Mammary epithelial cell (primary cell): ENCODE measurements at regions of chr11 and their contacts with region 1.

Region 1: GRCh38 chr11:69642913-69643632 is 2.1 kb downstream of the CCND1 start:
- DNase-seq: peak; percentile 71
- H3K4me3 ChIP-seq: peak overlapping the region; percentile 59 to 100 (median 98)
- H3K27ac ChIP-seq: peak overlapping the region; percentile 62
- H3K4me1 ChIP-seq: peaks cover 28% of the 10 kb centered on the region
- H3K27me3 ChIP-seq: no peaks in the 10 kb centered on the region
- CTCF ChIP-seq: peak; percentile 77 to 90

Region 2: GRCh38 chr11:68839054-68839865 is 803.8 kb before region 1 on chr11:
- CTCF ChIA-PET with region 1: no interaction called
- dilution Hi-C with region 1: no loop called
- in situ Hi-C with region 1: no loop called
- intact Hi-C with region 1: loop called (anchors 10 kb)
- DNase-seq: peak; percentile 89
- H3K4me3 ChIP-seq: peak overlapping the region; percentile 45 to 50 (median 49)
- H3K27ac ChIP-seq: peak overlapping the region; percentile 42
- H3K4me1 ChIP-seq: peaks cover 38% of the 10 kb centered on the region
- H3K27me3 ChIP-seq: no peaks in the 10 kb centered on the region
- CTCF ChIP-seq: peak in 1 of 2 donors; percentile 1

Region 3: GRCh38 chr11:69131644-69132300 is 511.3 kb before region 1 on chr11:
- CTCF ChIA-PET with region 1: interaction called, 3 read pairs
- dilution Hi-C with region 1: no loop called
- in situ Hi-C with region 1: no loop called
- intact Hi-C with region 1: loop called (anchors 1 kb)
- DNase-seq: peak; percentile 78
- H3K4me3 ChIP-seq: no peak overlapping the region
- H3K27ac ChIP-seq: no peak overlapping the region
- H3K4me1 ChIP-seq: peaks cover 4% of the 10 kb centered on the region
- H3K27me3 ChIP-seq: no peaks in the 10 kb centered on the region
- CTCF ChIP-seq: peak; percentile 90 to 94

Region 4: GRCh38 chr11:69296890-69297786 is 345.9 kb before region 1 on chr11:
- CTCF ChIA-PET with region 1: no interaction called
- dilution Hi-C with region 1: no loop called
- in situ Hi-C with region 1: loop called (anchors 5 to 10 kb)
- intact Hi-C with region 1: loop called (anchors 1 kb)
- DNase-seq: peak; percentile 99
- H3K4me3 ChIP-seq: no peak overlapping the region
- H3K27ac ChIP-seq: peak overlapping the region; percentile 92
- H3K4me1 ChIP-seq: peaks cover 66% of the 10 kb centered on the region
- H3K27me3 ChIP-seq: no peaks in the 10 kb centered on the region
- CTCF ChIP-seq: no peak

Region 5: GRCh38 chr11:69443138-69443967 is 199.7 kb before region 1 on chr11:
- CTCF ChIA-PET with region 1: no interaction called
- dilution Hi-C with region 1: no loop called
- in situ Hi-C with region 1: loop called in 1 of 2 experiments (anchors 25 kb)
- intact Hi-C with region 1: loop called (anchors 1 kb)
- DNase-seq: peak; percentile 87
- H3K4me3 ChIP-seq: peak overlapping the region in 2 of 3 experiments; percentile 32 to 40
- H3K27ac ChIP-seq: peak overlapping the region; percentile 39
- H3K4me1 ChIP-seq: peaks cover 43% of the 10 kb centered on the region
- H3K27me3 ChIP-seq: no peaks in the 10 kb centered on the region
- CTCF ChIP-seq: no peak

Region 6: DNA sequence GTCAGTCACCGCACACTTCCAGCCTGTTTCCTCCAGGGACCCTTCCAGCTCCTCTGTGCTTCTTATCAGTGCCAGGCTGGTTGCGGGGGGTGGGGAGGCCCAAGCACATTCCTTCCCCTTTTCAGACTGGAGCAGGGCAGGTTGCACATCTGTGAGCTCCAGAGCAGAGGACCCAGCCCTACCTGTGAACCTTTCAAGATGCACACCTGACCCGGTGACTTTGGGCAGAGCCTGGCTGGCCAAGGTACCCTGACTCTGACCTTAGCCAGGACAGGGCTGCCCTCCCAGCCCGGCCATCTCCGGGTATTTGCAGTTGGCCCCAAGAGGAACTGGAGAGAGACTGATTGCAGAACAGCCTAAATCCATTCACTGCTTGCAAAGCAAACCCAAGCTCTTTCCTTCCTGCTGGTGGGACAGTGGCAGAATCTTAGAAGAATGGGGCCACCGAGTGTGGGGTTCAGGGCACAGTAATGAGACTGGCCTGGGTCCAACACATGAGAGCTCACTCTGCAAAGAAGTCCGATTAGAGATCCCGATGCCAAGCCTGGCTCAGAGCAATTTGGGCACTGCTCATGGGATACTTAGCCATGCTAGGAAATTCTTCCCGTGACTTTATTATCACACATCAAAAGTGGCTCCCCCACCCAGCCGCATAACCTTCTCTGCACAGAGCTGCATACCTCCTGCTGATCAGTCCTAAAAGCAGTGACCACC is 66.8 kb before region 1 on chr11:
- CTCF ChIA-PET with region 1: no interaction called
- dilution Hi-C with region 1: no loop called
- in situ Hi-C with region 1: no loop called
- intact Hi-C with region 1: no loop called
- DNase-seq: no peak
- H3K4me3 ChIP-seq: no peak overlapping the region
- H3K27ac ChIP-seq: no peak overlapping the region
- H3K4me1 ChIP-seq: no peaks in the 10 kb centered on the region
- H3K27me3 ChIP-seq: no peaks in the 10 kb centered on the region
- CTCF ChIP-seq: no peak

Region 7: GRCh38 chr11:69588270-69588669 is 54.8 kb before region 1 on chr11:
- CTCF ChIA-PET with region 1: interaction called, 10 read pairs
- dilution Hi-C with region 1: no loop called
- in situ Hi-C with region 1: no loop called
- intact Hi-C with region 1: loop called (anchors 1 kb)
- DNase-seq: peak; percentile 83
- H3K4me3 ChIP-seq: no peak overlapping the region
- H3K27ac ChIP-seq: peak overlapping the region; percentile 83
- H3K4me1 ChIP-seq: peaks cover 18% of the 10 kb centered on the region
- H3K27me3 ChIP-seq: no peaks in the 10 kb centered on the region
- CTCF ChIP-seq: peak; percentile 51 to 70